Psoas muscle (tissue), 8 donors: ENCODE measurements at regions of chr19 and their contacts with region 1.

Region 1: GRCh38 chr19:21505459-21506451 is at the start of gene ZNF429:
- DNase-seq: peak; percentile 91 to 94
- ATAC-seq: peak; percentile 98 to 99 (median 99)
- H3K4me3 ChIP-seq: peak within 1 kb of the TSS; percentile 78
- H3K27ac ChIP-seq: peak within 1 kb of the TSS; percentile 90
- H3K4me1 ChIP-seq: peaks cover 10% of the 10 kb centered on the region
- H3K27me3 ChIP-seq: no peaks in the 10 kb centered on the region
- CTCF ChIP-seq: no peak
- total RNA-seq, gene ZNF429: 6.9 to 11.3 (median 7.7) TPM

Region 2: GRCh38 chr19:21474671-21475181 is 31.0 kb before region 1 on chr19:
- intact Hi-C with region 1: no loop called
- DNase-seq: peak; percentile 66 to 85
- ATAC-seq: peak; percentile 73 to 100 (median 96)
- H3K4me3 ChIP-seq: peak overlapping the region; percentile 67
- H3K27ac ChIP-seq: no peak overlapping the region
- H3K4me1 ChIP-seq: no peaks in the 10 kb centered on the region
- H3K27me3 ChIP-seq: peaks cover 0 to 7% (median 0%) of the 10 kb centered on the region in 3 donors
- CTCF ChIP-seq: no peak

Region 3: GRCh38 chr19:21767065-21767800 is 261.5 kb after region 1 on chr19 and contains the start of gene ZNF100:
- intact Hi-C with region 1: loop called in 1 of 2 experiments (anchors 10 kb)
- DNase-seq: peak; percentile 93 to 96
- ATAC-seq: peak; percentile 90 to 98 (median 96)
- H3K4me3 ChIP-seq: peak within 1 kb of the TSS; percentile 76
- H3K27ac ChIP-seq: peak within 1 kb of the TSS; percentile 86
- H3K4me1 ChIP-seq: no peaks in the 10 kb centered on the region
- H3K27me3 ChIP-seq: no peaks in the 10 kb centered on the region
- CTCF ChIP-seq: no peak
- total RNA-seq, gene ZNF100: 3.1 to 6.0 (median 4.9) TPM